Psoas muscle (tissue), 8 donors: ENCODE measurements at regions of chr7 and their contacts with region 1.

Region 1: DNA sequence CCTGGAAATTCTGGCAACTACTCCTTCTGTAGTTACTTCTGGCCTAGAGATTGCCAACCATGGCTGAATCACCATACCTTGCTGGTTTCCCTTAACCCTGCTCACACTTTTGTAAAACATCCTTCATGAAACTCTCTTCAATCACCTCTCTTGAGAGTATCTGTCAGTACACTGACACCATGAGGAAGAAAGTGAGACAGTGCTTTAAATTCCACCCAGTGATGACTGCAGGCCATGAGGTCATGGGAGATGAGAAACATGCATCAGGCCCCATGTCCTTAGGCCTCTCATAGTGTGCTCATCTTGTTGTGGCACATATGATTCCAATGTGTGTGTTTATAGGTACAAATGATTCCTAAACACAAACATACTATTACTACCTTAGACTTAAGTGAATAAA is 24.6 kb upstream of the NAMPT start:
- DNase-seq: no peak
- ATAC-seq: no peak
- H3K4me3 ChIP-seq: no peak overlapping the region
- H3K27ac ChIP-seq: no peak overlapping the region
- H3K4me1 ChIP-seq: no peaks in the 10 kb centered on the region
- H3K27me3 ChIP-seq: no peaks in the 10 kb centered on the region
- CTCF ChIP-seq: no peak

Region 2: GRCh38 chr7:106358103-106358663 is 48.8 kb after region 1 on chr7:
- intact Hi-C with region 1: loop called in 1 of 2 experiments (anchors 10 kb)
- DNase-seq: no peak
- ATAC-seq: no peak
- H3K4me3 ChIP-seq: no peak overlapping the region
- H3K27ac ChIP-seq: no peak overlapping the region
- H3K4me1 ChIP-seq: no peaks in the 10 kb centered on the region
- H3K27me3 ChIP-seq: peaks cover 0 to 3% (median 0%) of the 10 kb centered on the region in 3 donors
- CTCF ChIP-seq: no peak